ENCODE measurements at regions of chr11 and their contacts with region 1.

Region 1: DNA sequence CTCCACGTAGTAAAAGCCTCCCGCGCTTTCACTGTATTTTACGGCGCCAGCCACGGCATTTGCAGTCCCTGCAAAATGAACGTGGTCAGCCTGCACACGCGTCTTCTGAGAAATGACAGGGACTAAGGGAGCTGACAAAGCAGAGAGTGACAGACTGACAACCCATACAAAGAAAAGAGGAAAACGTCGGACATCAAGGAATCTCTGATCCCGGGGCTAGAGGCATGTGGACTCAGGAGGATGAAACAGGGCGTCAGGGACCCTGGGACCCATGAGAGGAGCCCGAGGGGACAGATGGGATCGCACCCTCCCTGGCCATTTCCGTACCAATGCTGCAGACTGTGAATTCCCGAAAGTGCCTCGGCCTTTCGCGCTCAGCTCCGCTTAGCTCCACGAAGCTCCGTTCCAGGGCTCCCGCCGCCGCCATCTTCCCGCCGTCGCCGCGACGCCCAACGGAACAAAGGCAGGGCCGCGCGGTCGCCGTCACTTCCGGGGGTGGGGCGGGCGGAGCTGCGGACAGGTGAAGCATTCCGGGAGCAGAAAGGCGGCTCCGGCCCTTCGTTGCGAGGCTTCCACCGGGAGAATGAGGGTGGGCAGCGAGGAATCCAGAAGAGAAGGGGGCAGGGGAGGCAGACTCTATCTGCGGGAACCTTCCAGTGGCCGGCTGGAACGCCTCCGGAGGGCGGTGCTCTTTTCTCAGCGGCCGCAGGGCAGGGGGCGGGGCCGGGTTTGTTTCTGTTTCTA is at the start of gene NUP160:
- DNase-seq: peak; percentile 81 to 95 (median 93)
- ATAC-seq: peak; percentile 94 to 96
- H3K4me3 ChIP-seq: peak within 1 kb of the TSS; percentile 42
- H3K27ac ChIP-seq: peak within 1 kb of the TSS; percentile 33
- H3K4me1 ChIP-seq: no peaks in the 10 kb centered on the region
- H3K27me3 ChIP-seq: no peaks in the 10 kb centered on the region
- total RNA-seq, gene NUP160: 14.7 to 18.4 (median 15.3) TPM

Region 2: DNA sequence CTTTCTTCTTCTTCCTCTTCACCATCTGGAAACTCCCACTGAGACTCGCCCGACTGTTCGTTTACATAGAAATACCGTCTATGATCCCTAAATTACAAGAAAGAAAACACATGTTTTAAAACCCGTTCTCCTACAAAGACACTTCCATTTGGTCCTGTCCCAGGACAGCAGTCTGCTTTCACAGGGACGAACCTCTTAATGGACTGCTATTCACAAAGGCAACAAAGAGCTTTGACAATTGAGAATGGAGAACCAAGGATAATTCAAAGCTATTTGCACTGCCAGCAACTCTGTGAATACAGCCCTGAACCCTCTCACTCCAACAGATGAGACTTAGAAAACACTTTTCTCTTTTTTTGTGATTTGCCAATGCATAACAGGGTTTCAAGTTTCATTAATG is 116.6 kb before region 1 on chr11:
- intact Hi-C with region 1: loop called in 1 of 4 experiments (anchors 10 kb)
- DNase-seq: no peak
- ATAC-seq: no peak
- H3K4me3 ChIP-seq: no peak overlapping the region
- H3K27ac ChIP-seq: no peak overlapping the region
- H3K4me1 ChIP-seq: no peaks in the 10 kb centered on the region
- H3K27me3 ChIP-seq: no peaks in the 10 kb centered on the region

Region 3: GRCh38 chr11:47766305-47767227 is 81.5 kb before region 1 on chr11:
- intact Hi-C with region 1: loop called in 1 of 4 experiments (anchors 10 kb)
- DNase-seq: peak; percentile 61 to 89 (median 85)
- ATAC-seq: peak; percentile 27 to 48
- H3K4me3 ChIP-seq: peak overlapping the region; percentile 90
- H3K27ac ChIP-seq: peak overlapping the region; percentile 99
- H3K4me1 ChIP-seq: no peaks in the 10 kb centered on the region
- H3K27me3 ChIP-seq: no peaks in the 10 kb centered on the region